ENCODE measurements at regions of chr16 and their contacts with region 1.

Region 1: GRCh38 chr16:55207693-55208428 is 116.1 kb upstream of the IRX6 start:
- DNase-seq: peak in 3 of 7 donors; percentile 6 to 19 (median 17)
- H3K4me3 ChIP-seq: no peak overlapping the region
- H3K27ac ChIP-seq: no peak overlapping the region
- H3K4me1 ChIP-seq: no peaks in the 10 kb centered on the region
- H3K27me3 ChIP-seq: no peaks in the 10 kb centered on the region
- CTCF ChIP-seq: no peak
- POLR2A ChIP-seq: no peak

Region 2: DNA sequence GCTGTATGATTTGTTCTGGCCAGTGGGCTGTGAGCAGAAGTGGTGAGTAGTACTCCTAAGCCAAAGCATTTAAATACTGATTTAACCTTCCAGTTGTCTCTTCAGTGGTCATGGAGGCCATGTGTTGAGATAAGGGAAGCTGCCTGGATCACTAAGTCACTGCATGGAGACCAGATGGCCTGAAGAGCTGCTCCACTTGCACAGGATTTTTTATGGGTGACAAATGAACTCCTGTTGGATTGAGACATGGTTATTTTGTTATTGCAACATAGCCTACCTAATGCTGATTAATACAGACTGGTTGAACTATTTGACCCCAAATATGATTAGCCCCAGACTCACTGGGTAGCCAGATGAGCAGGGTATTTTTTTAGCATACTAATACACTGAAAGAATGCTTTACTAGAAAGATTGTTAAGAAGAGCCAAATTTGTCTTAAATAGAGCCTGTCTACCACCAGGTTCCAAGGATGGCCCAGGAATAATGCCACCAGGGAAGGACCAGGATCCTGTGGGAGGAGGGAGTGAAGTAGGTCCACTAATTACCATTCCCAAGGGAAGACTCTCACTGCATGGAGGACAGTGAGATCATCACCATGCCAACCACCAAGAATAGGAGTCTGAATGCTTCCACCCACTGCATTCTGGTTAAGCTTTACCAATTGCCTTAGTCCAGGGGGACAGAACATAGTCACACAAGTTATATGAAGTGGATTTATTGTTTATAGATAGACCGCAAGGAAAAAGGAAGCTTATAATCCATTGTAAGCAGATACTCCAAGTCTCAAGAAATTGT is 71.3 kb before region 1 on chr16:
- intact Hi-C with region 1: loop called in 1 of 2 experiments (anchors 10 kb)
- DNase-seq: no peak
- H3K4me3 ChIP-seq: no peak overlapping the region
- H3K27ac ChIP-seq: no peak overlapping the region
- H3K4me1 ChIP-seq: no peaks in the 10 kb centered on the region
- H3K27me3 ChIP-seq: no peaks in the 10 kb centered on the region
- CTCF ChIP-seq: no peak
- POLR2A ChIP-seq: no peak